Naive thymus-derived CD4-positive, alpha-beta T cell (primary cell): ENCODE measurements at regions of chr11 and their contacts with region 1.

Region 1: DNA sequence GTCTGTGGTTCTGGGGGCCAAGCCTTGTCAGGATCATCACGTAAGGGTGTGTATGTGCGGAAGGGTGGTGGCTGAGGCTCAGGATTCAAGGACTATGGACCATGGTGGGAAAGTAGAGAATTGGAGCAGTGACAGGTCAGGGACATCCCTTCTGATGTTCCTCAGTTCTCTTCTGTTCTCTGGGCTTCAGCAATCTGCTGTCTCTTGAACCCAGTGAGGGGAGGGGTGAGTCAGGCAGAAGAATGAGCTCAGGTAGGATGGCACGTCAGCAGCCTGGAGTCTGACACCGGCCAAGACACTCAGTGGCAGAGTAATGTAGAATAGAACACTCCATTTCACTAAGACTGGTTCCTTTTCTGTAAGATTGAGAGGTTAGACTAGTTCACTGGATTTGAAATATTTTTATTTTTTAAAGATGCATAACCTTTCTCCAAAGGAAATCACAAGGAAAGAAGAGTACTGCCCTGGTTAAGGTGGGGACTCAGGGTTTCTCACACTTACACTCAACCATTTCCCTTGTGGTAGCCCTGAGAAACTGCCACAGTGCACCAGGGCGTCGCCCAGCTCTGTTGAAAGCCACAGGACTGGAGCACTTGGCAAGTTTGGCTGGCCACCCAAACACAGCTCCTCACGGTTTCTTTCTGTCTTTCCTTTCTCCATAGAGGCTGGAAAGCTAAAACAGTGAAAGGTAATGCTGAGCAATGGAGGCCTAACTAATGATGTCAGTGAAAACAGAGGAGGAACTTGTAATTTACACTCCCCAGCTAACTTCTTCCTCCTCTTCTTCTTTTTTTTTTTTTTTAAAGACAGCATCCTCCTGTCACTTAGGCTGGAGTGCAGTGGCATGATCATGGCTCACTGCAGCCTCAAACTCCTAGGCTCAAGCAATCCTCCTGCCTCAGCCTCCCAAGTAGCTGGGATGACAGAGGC is 23.1 kb upstream of the MICAL2 start:
- DNase-seq: peak in 2 of 9 donors; percentile 23 to 34
- ATAC-seq: peak; percentile 87
- H3K4me3 ChIP-seq: peak overlapping the region; percentile 4
- H3K4me3 Mint-ChIP-seq: peak overlapping the region in 8 of 10 donors; percentile 0 to 84 (median 36)
- H3K27ac ChIP-seq: no peak overlapping the region
- H3K27ac Mint-ChIP-seq: peak overlapping the region in 6 of 9 donors; percentile 5 to 85 (median 29)
- H3K4me1 ChIP-seq: peaks cover 33 to 60% of the 10 kb centered on the region in 2 donors
- H3K4me1 Mint-ChIP-seq: peaks cover 38 to 75% (median 57%) of the 10 kb centered on the region in 7 donors
- H3K27me3 ChIP-seq: no peaks in the 10 kb centered on the region
- H3K27me3 Mint-ChIP-seq: no peaks in the 10 kb centered on the region

Region 2: GRCh38 chr11:12137938-12138731 is 50.8 kb after region 1 on chr11:
- CTCF ChIA-PET with region 1: no interaction called
- POLR2A ChIA-PET with region 1: interaction called, 4 read pairs
- intact Hi-C with region 1: loop called in 1 of 2 experiments (anchors 10 kb)
- DNase-seq: no peak
- ATAC-seq: no peak
- H3K4me3 ChIP-seq: no peak overlapping the region
- H3K4me3 Mint-ChIP-seq: peak overlapping the region in 2 of 10 donors; percentile 11 to 42
- H3K27ac ChIP-seq: no peak overlapping the region
- H3K27ac Mint-ChIP-seq: peak overlapping the region in 3 of 9 donors; percentile 36 to 82 (median 63)
- H3K4me1 ChIP-seq: peaks cover 2 to 38% of the 10 kb centered on the region in 2 donors
- H3K4me1 Mint-ChIP-seq: peaks cover 40 to 67% (median 58%) of the 10 kb centered on the region in 7 donors
- H3K27me3 ChIP-seq: no peaks in the 10 kb centered on the region
- H3K27me3 Mint-ChIP-seq: no peaks in the 10 kb centered on the region

Region 3: GRCh38 chr11:12224537-12224893 is 137.2 kb after region 1 on chr11:
- CTCF ChIA-PET with region 1: no interaction called
- POLR2A ChIA-PET with region 1: no interaction called
- intact Hi-C with region 1: loop called in 1 of 2 experiments (anchors 5 kb)
- DNase-seq: peak; percentile 55 to 86 (median 81)
- ATAC-seq: peak; percentile 97
- H3K4me3 ChIP-seq: peak overlapping the region; percentile 52
- H3K4me3 Mint-ChIP-seq: peak overlapping the region; percentile 67 to 91 (median 75)
- H3K27ac ChIP-seq: peak overlapping the region; percentile 54
- H3K27ac Mint-ChIP-seq: peak overlapping the region; percentile 87 to 97 (median 91)
- H3K4me1 ChIP-seq: peaks cover 36 to 41% of the 10 kb centered on the region in 2 donors
- H3K4me1 Mint-ChIP-seq: peaks cover 33 to 51% (median 47%) of the 10 kb centered on the region in 7 donors
- H3K27me3 ChIP-seq: no peaks in the 10 kb centered on the region
- H3K27me3 Mint-ChIP-seq: no peaks in the 10 kb centered on the region

Region 4: DNA sequence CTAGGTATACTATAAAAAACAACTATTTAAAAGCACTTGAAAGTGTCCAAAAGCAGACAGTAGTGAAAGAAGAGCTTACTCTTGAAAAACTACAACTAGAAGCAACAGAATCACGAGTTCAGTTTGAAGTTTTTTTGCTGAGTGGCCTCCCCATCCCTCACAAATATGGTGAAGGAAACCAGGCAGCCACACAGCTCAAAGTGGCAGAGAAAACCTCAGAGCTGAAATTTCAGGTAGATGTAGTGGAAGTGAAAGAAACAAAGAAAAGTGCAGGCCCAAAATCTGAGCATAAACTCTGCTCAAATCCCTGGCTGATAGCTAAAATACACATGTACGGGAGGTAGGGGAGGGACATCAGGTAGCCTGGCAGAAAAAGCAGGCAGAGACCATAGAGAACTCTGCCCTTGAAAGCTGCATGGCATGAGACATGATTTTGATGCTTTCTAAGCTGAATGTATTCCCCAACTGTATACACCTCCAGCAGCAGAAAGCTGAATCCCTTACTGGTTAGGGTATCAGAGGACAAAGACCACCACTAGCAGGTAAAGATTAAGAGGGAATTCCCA is 1363.6 kb after region 1 on chr11:
- CTCF ChIA-PET with region 1: no interaction called
- POLR2A ChIA-PET with region 1: no interaction called
- intact Hi-C with region 1: no loop called
- DNase-seq: peak in 1 of 9 donors; percentile 14
- ATAC-seq: no peak
- H3K4me3 ChIP-seq: no peak overlapping the region
- H3K4me3 Mint-ChIP-seq: peak overlapping the region in 6 of 10 donors; percentile 6 to 65 (median 46)
- H3K27ac ChIP-seq: no peak overlapping the region
- H3K27ac Mint-ChIP-seq: peak overlapping the region in 4 of 9 donors; percentile 12 to 89 (median 82)
- H3K4me1 ChIP-seq: no peaks in the 10 kb centered on the region
- H3K4me1 Mint-ChIP-seq: peaks cover 30 to 73% (median 67%) of the 10 kb centered on the region in 7 donors
- H3K27me3 ChIP-seq: no peaks in the 10 kb centered on the region
- H3K27me3 Mint-ChIP-seq: no peaks in the 10 kb centered on the region